Cardiac septum (tissue), 1 donor: ENCODE measurements at regions of chr6 and their contacts with region 1.

Region 1: DNA sequence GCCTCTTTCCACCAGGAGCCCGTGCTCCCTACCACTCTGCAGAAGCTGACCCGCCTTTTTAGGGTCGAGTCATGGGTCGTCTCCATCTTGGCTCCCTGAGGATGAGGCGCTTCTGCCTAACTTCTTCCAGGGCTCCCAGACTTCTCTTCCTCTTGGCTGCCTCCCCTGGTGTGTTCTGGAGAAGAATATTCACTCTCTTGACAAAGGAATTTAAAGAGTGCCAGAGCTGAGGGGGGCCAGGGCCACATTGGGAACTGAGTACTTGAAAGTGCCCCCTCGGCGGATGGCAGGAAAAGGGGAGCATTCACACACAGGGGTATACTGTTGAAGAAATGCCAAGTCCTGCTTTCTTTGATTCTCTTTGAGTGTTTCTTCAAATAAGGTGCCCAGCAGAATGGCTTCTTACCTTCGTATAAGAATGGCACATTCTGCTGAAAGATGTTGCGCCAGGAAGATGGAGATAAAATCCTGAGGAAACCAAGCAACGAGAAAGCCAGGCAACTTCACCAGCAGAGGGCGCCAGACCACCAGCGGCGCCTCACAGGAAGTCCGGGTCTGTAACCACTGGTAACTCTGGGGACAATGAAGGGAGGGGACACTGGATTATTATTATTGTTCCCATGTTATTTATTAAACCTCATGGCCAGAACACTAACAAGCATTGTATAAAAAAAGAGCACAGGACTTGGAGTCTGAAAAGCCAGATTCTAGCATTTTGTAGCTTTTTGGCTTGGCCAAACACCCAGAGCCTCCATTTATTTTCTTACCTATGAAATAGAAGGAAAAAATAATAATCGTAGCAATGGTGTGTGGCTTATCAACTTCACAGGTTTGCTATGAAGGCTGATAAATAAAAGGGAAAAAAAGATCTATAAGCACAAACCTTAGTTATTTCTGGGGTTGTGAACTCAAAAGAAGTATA is 176.7 kb downstream of the HACE1 start:
- DNase-seq: peak; percentile 83

Region 2: DNA sequence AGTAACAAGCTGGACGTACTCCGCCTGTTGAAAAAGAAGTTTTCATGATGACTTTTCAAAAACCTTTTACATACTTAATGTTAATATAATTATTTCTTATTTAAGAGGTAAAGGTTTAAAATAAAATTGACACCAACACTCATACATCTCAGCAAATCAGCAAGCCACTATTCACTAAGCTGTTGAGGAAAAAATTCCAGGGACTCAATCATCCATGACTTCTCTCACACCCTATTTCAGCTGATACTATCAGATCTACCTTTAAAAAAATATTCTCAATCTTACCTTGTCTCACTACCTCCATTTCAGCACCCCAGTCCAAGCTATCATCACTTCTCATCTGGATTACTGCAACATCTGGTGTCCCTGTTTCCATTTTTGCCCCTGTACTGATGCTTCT is 67.5 kb after region 1 on chr6:
- intact Hi-C with region 1: no loop called
- DNase-seq: no peak

Region 3: GRCh38 chr6:104771258-104771832 is 88.4 kb after region 1 on chr6:
- intact Hi-C with region 1: loop called (anchors 5 kb)
- DNase-seq: no peak